Natural killer cell (primary cell): ENCODE measurements at regions of chr10 and their contacts with region 1.

Region 1: GRCh38 chr10:32346134-32346550 is 816 bp downstream of the EPC1 start:
- DNase-seq: peak; percentile 94 to 97
- ATAC-seq: peak; percentile 82 to 95 (median 83)
- H3K4me3 ChIP-seq: peak overlapping the region; percentile 85
- H3K4me3 Mint-ChIP-seq: peak overlapping the region; percentile 95
- H3K27ac ChIP-seq: peak overlapping the region; percentile 95
- H3K27ac Mint-ChIP-seq: peak overlapping the region; percentile 95 to 99
- H3K4me1 ChIP-seq: peaks cover 11% of the 10 kb centered on the region
- H3K4me1 Mint-ChIP-seq: peaks cover 57 to 68% of the 10 kb centered on the region in 2 donors
- H3K27me3 ChIP-seq: no peaks in the 10 kb centered on the region
- H3K27me3 Mint-ChIP-seq: no peaks in the 10 kb centered on the region
- CTCF ChIP-seq: peak; percentile 85

Region 2: GRCh38 chr10:32256613-32257437 is 89.3 kb before region 1 on chr10:
- intact Hi-C with region 1: loop called (anchors 1 kb)
- DNase-seq: peak; percentile 70 to 85
- ATAC-seq: peak; percentile 79 to 95 (median 89)
- H3K4me3 ChIP-seq: no peak overlapping the region
- H3K4me3 Mint-ChIP-seq: no peak overlapping the region
- H3K27ac ChIP-seq: no peak overlapping the region
- H3K27ac Mint-ChIP-seq: no peak overlapping the region
- H3K4me1 ChIP-seq: no peaks in the 10 kb centered on the region
- H3K4me1 Mint-ChIP-seq: peaks cover 5 to 6% of the 10 kb centered on the region in 2 donors
- H3K27me3 ChIP-seq: no peaks in the 10 kb centered on the region
- H3K27me3 Mint-ChIP-seq: no peaks in the 10 kb centered on the region
- CTCF ChIP-seq: peak; percentile 90

Region 3: DNA sequence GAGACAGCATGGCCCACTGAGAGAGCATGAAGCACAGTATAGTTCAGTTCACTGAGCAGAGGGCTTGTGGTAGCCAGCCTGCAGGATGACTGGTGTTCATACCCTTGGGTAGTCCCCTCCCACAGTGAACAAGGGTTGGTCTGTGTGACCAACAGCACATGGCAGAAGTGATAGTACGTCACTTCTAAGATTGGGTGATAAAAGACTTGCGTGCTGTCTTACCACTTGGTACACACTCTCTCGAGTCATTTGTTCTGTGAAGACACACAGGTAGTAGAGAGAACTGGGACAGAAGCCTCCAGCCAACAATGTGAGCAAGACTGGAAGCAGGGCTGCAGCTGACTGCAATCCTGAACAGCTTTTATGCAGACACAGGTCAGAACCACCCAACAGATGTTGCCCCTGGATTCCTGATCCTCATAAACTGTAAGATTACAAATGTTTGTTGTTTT is 13.8 kb before region 1 on chr10:
- intact Hi-C with region 1: loop called (anchors 2 kb)
- DNase-seq: peak; percentile 67 to 90
- ATAC-seq: peak; percentile 95 to 98 (median 96)
- H3K4me3 ChIP-seq: no peak overlapping the region
- H3K4me3 Mint-ChIP-seq: peak overlapping the region; percentile 62
- H3K27ac ChIP-seq: peak overlapping the region; percentile 75
- H3K27ac Mint-ChIP-seq: peak overlapping the region; percentile 67 to 93
- H3K4me1 ChIP-seq: peaks cover 40% of the 10 kb centered on the region
- H3K4me1 Mint-ChIP-seq: peaks cover 82 to 95% of the 10 kb centered on the region in 2 donors
- H3K27me3 ChIP-seq: no peaks in the 10 kb centered on the region
- H3K27me3 Mint-ChIP-seq: no peaks in the 10 kb centered on the region
- CTCF ChIP-seq: no peak

Region 4: DNA sequence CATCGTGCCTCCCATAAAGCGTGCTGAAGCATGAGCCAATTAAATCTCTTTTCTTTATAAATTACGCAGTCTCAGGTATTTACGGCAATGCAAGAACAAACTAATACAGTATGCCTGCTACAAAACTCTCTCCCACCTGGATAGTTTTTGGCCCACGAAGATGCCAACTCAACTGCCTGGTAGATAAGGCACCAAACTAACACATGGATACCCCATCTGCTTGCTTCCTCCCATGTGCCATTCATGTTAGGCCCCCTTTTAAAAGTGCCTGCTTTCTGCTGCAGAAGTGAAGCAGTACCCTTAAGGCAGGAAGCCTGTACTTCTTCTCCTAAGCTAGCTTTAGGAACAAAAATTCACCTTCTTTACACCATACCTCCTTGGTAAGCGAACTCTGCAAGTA is 16.4 kb after region 1 on chr10:
- intact Hi-C with region 1: loop called (anchors 1 kb)
- DNase-seq: no peak
- ATAC-seq: no peak
- H3K4me3 ChIP-seq: no peak overlapping the region
- H3K4me3 Mint-ChIP-seq: no peak overlapping the region
- H3K27ac ChIP-seq: no peak overlapping the region
- H3K27ac Mint-ChIP-seq: no peak overlapping the region
- H3K4me1 ChIP-seq: peaks cover 15% of the 10 kb centered on the region
- H3K4me1 Mint-ChIP-seq: peaks cover 38 to 50% of the 10 kb centered on the region in 2 donors
- H3K27me3 ChIP-seq: no peaks in the 10 kb centered on the region
- H3K27me3 Mint-ChIP-seq: no peaks in the 10 kb centered on the region
- CTCF ChIP-seq: no peak